ENCODE measurements at regions of chr9 and their contacts with region 1.

Region 1: GRCh38 chr9:121059998-121060636 is 10.0 kb upstream of the C5 start:
- DNase-seq: peak in 14 of 35 experiments; percentile 3 to 75 (median 23)
- ATAC-seq: no peak
- H3K4me3 ChIP-seq: no peak overlapping the region
- H3K4me3 Mint-ChIP-seq: no peak overlapping the region
- H3K27ac ChIP-seq: no peak overlapping the region
- H3K27ac Mint-ChIP-seq: no peak overlapping the region
- H3K4me1 ChIP-seq: peaks cover 0 to 11% of the 10 kb centered on the region in 2 experiments
- H3K4me1 Mint-ChIP-seq: peaks cover 14 to 20% (median 20%) of the 10 kb centered on the region in 3 donors
- H3K27me3 ChIP-seq: no peaks in the 10 kb centered on the region
- H3K27me3 Mint-ChIP-seq: no peaks in the 10 kb centered on the region

Region 2: GRCh38 chr9:119844431-119844830 is 1215.7 kb before region 1 on chr9:
- CTCF ChIA-PET with region 1: no interaction called
- POLR2A ChIA-PET with region 1: no interaction called
- DNase-seq: no peak
- ATAC-seq: no peak
- H3K4me3 ChIP-seq: no peak overlapping the region
- H3K4me3 Mint-ChIP-seq: no peak overlapping the region
- H3K27ac ChIP-seq: no peak overlapping the region
- H3K27ac Mint-ChIP-seq: no peak overlapping the region
- H3K4me1 ChIP-seq: no peaks in the 10 kb centered on the region
- H3K4me1 Mint-ChIP-seq: no peaks in the 10 kb centered on the region
- H3K27me3 ChIP-seq: no peaks in the 10 kb centered on the region
- H3K27me3 Mint-ChIP-seq: no peaks in the 10 kb centered on the region

Region 3: DNA sequence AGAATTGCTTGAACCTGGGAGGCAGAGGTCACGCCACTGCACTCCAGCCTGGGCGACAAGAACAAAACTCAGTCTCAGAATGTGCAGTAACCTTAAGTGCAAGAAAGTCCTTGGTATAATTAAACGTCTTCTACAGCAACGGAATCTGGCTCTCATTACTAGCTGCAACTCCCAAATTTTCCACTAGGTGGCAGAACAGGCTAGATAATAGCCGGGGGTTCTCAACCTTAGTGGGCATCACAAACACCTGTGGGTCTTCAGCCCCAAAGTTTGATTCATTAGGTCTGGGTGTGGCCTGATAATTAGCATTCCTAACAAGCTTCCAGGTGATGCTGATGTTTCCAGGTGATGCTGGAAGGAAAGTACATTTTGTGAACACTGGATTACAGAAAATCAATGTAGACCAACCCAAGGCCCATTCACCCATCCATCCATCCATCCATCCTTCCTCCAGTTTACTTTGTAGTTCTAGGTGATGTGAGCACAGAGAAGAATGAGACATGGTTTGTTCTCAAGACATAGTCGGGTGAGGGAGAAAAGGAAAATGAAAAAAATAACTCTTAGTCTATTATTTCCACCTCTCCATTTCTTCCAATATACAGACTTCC is 304.2 kb before region 1 on chr9:
- CTCF ChIA-PET with region 1: interaction called, 9 to 63 read pairs
- POLR2A ChIA-PET with region 1: no interaction called
- DNase-seq: peak; percentile 11 to 84 (median 49)
- ATAC-seq: peak; percentile 53 to 75 (median 69)
- H3K4me3 ChIP-seq: no peak overlapping the region
- H3K4me3 Mint-ChIP-seq: no peak overlapping the region
- H3K27ac ChIP-seq: no peak overlapping the region
- H3K27ac Mint-ChIP-seq: peak overlapping the region; percentile 58 to 62
- H3K4me1 ChIP-seq: no peaks in the 10 kb centered on the region
- H3K4me1 Mint-ChIP-seq: peaks cover 7 to 24% (median 14%) of the 10 kb centered on the region in 3 donors
- H3K27me3 ChIP-seq: no peaks in the 10 kb centered on the region
- H3K27me3 Mint-ChIP-seq: no peaks in the 10 kb centered on the region

Region 4: DNA sequence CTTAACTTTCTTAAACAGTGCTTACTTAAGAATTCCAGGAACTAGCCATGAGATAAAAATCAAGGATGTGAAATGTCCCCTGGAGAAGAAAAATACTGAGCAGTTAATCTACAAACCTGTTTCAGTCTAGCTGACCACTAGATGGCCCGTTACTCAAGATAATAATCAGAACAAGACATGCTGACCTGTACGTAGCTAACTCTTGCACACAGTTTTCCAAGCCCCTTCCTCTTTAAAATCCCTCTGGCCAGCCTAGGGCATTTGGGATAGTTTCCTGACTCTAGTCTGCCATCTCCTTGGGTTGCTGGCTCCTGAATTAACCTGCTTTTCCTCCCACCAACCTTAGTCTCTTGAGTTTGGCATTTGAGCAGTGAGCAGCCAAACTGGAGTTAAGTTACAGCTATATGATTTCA is 74.3 kb before region 1 on chr9:
- CTCF ChIA-PET with region 1: interaction called, 8 to 16 read pairs
- POLR2A ChIA-PET with region 1: no interaction called
- DNase-seq: no peak
- ATAC-seq: no peak
- H3K4me3 ChIP-seq: no peak overlapping the region
- H3K4me3 Mint-ChIP-seq: no peak overlapping the region
- H3K27ac ChIP-seq: no peak overlapping the region
- H3K27ac Mint-ChIP-seq: no peak overlapping the region
- H3K4me1 ChIP-seq: peaks cover 0 to 3% of the 10 kb centered on the region in 2 experiments
- H3K4me1 Mint-ChIP-seq: peaks cover 0 to 5% (median 4%) of the 10 kb centered on the region in 3 donors
- H3K27me3 ChIP-seq: no peaks in the 10 kb centered on the region
- H3K27me3 Mint-ChIP-seq: no peaks in the 10 kb centered on the region

Region 5: GRCh38 chr9:121071756-121072421 is 11.8 kb after region 1 on chr9:
- CTCF ChIA-PET with region 1: interaction called in 1 of 2 experiments, 28 read pairs
- POLR2A ChIA-PET with region 1: interaction called in 1 of 2 experiments, 5 read pairs
- DNase-seq: peak in 15 of 35 experiments; percentile 3 to 62 (median 16)
- ATAC-seq: peak in 3 of 4 experiments; percentile 3 to 13 (median 6)
- H3K4me3 ChIP-seq: peak overlapping the region; percentile 36 to 59
- H3K4me3 Mint-ChIP-seq: peak overlapping the region; percentile 91 to 100 (median 97)
- H3K27ac ChIP-seq: peak overlapping the region; percentile 58
- H3K27ac Mint-ChIP-seq: peak overlapping the region; percentile 88 to 93
- H3K4me1 ChIP-seq: peaks cover 8 to 21% of the 10 kb centered on the region in 2 experiments
- H3K4me1 Mint-ChIP-seq: peaks cover 42 to 53% (median 43%) of the 10 kb centered on the region in 3 donors
- H3K27me3 ChIP-seq: no peaks in the 10 kb centered on the region
- H3K27me3 Mint-ChIP-seq: no peaks in the 10 kb centered on the region

Region 6: GRCh38 chr9:121185178-121185745 is 125.1 kb after region 1 on chr9:
- CTCF ChIA-PET with region 1: no interaction called
- POLR2A ChIA-PET with region 1: interaction called in 1 of 2 experiments, 11 read pairs
- DNase-seq: no peak
- ATAC-seq: peak in 3 of 4 experiments; percentile 18 to 22 (median 20)
- H3K4me3 ChIP-seq: no peak overlapping the region
- H3K4me3 Mint-ChIP-seq: no peak overlapping the region
- H3K27ac ChIP-seq: peak overlapping the region; percentile 35
- H3K27ac Mint-ChIP-seq: peak overlapping the region; percentile 83
- H3K4me1 ChIP-seq: peaks cover 4 to 9% of the 10 kb centered on the region in 2 experiments
- H3K4me1 Mint-ChIP-seq: peaks cover 59 to 80% (median 75%) of the 10 kb centered on the region in 3 donors
- H3K27me3 ChIP-seq: no peaks in the 10 kb centered on the region
- H3K27me3 Mint-ChIP-seq: no peaks in the 10 kb centered on the region

Region 7: DNA sequence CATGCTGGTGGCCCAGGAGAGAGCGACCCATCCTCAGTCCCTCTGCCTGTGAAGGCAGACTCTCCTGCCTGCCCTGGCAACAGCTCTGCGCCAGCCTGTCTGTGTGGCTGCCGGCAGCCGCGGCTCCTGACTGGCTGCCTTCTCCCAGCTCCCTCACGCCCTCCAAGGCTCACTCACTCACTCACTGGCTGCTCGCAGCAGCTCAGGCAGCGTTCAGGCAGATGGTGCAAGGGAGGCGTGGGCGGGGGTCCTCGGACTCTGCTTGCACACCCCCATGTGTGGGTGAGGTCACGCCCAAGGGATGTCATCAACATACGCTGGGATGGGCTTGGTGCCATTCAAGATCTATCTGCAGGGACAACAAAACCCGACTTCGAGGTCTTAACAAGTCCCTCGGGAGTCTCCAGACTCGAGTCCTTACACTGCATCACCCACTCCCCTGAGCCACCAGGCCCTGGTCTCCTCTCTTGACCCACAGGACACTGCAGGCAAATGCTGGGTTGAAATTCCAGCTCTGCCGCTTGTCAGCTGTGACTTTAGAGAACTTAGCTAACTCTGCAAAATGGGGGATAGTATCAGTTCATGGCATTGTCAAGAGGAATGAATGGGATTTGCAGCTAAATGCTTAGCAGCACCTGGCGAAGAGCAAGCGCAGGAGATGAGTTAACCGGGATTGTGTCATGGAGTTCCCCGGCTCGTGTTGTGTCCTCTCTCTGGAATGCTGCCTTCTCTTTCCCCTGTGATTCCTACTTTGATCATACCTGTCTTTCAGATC is 658.2 kb after region 1 on chr9:
- CTCF ChIA-PET with region 1: no interaction called
- POLR2A ChIA-PET with region 1: no interaction called
- DNase-seq: no peak
- ATAC-seq: no peak
- H3K4me3 ChIP-seq: no peak overlapping the region
- H3K4me3 Mint-ChIP-seq: no peak overlapping the region
- H3K27ac ChIP-seq: no peak overlapping the region
- H3K27ac Mint-ChIP-seq: no peak overlapping the region
- H3K4me1 ChIP-seq: no peaks in the 10 kb centered on the region
- H3K4me1 Mint-ChIP-seq: no peaks in the 10 kb centered on the region
- H3K27me3 ChIP-seq: peaks cover 0 to 15% of the 10 kb centered on the region in 2 experiments
- H3K27me3 Mint-ChIP-seq: peaks cover 0 to 3% of the 10 kb centered on the region in 2 donors

Measured in T-cell (primary cell).